Right lobe of liver (tissue), 6 donors: ENCODE measurements at regions of chr4 and their contacts with region 1.

Region 1: GRCh38 chr4:86981789-86982188 is 47.0 kb downstream of the AFF1 start:
- DNase-seq: no peak
- ATAC-seq: peak in 3 of 4 donors; percentile 19 to 36 (median 36)
- H3K4me3 ChIP-seq: no peak overlapping the region
- H3K27ac ChIP-seq: no peak overlapping the region
- H3K4me1 ChIP-seq: peaks cover 0 to 15% (median 4%) of the 10 kb centered on the region in 4 donors
- H3K27me3 ChIP-seq: no peaks in the 10 kb centered on the region
- CTCF ChIP-seq: no peak
- POLR2A ChIP-seq: peak; percentile 16

Region 2: DNA sequence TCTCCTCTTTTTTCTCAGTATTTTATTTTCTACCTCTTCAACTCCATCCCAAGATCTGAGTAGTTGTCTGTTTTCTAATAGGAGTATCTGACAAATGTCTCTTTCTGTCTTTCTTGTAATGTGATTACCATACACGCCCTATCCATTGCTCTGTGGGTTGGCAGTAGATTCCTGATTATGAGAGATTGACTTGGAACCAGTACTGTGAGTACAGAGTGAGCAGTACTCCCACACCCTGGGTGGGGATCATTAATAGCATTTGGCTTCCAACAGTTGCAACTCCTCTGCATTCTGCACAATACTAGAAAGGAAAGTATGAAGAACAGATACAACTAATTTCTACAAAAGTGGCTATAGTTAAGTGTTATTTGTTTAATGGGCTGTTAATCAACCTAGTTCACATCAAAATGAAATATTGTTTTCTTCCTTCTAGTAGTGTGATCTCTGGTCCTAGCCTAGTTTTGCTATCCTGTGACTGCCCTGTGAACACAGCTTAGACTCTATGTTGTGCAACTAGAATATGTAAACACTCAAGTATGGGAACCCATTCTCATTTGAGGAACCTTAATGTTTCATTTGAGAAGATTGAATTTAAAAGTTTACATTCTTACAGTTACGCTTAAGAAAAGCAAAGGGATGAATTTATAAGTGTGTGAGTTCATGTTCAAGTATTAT is 274.7 kb before region 1 on chr4:
- intact Hi-C with region 1: no loop called
- DNase-seq: no peak
- ATAC-seq: no peak
- H3K4me3 ChIP-seq: no peak overlapping the region
- H3K27ac ChIP-seq: no peak overlapping the region
- H3K4me1 ChIP-seq: no peaks in the 10 kb centered on the region
- H3K27me3 ChIP-seq: no peaks in the 10 kb centered on the region
- CTCF ChIP-seq: no peak
- POLR2A ChIP-seq: no peak

Region 3: GRCh38 chr4:86934771-86935565 is 46.8 kb before region 1 on chr4 and contains the start of gene AFF1:
- intact Hi-C with region 1: loop called in 1 of 2 experiments (anchors 10 kb)
- DNase-seq: peak; percentile 96 to 97 (median 96)
- ATAC-seq: peak; percentile 84 to 94 (median 88)
- H3K4me3 ChIP-seq: peak within 1 kb of the TSS; percentile 85 to 93 (median 89)
- H3K27ac ChIP-seq: peak within 1 kb of the TSS; percentile 97 to 98 (median 98)
- H3K4me1 ChIP-seq: peaks cover 0 to 40% (median 18%) of the 10 kb centered on the region in 4 donors
- H3K27me3 ChIP-seq: no peaks in the 10 kb centered on the region
- CTCF ChIP-seq: peak; percentile 49 to 54 (median 52)
- POLR2A ChIP-seq: peak; percentile 97
- total RNA-seq, gene AFF1: 23.8 to 39.6 (median 34.9) TPM